ENCODE measurements at regions of chr6 and their contacts with region 1.

Region 1: DNA sequence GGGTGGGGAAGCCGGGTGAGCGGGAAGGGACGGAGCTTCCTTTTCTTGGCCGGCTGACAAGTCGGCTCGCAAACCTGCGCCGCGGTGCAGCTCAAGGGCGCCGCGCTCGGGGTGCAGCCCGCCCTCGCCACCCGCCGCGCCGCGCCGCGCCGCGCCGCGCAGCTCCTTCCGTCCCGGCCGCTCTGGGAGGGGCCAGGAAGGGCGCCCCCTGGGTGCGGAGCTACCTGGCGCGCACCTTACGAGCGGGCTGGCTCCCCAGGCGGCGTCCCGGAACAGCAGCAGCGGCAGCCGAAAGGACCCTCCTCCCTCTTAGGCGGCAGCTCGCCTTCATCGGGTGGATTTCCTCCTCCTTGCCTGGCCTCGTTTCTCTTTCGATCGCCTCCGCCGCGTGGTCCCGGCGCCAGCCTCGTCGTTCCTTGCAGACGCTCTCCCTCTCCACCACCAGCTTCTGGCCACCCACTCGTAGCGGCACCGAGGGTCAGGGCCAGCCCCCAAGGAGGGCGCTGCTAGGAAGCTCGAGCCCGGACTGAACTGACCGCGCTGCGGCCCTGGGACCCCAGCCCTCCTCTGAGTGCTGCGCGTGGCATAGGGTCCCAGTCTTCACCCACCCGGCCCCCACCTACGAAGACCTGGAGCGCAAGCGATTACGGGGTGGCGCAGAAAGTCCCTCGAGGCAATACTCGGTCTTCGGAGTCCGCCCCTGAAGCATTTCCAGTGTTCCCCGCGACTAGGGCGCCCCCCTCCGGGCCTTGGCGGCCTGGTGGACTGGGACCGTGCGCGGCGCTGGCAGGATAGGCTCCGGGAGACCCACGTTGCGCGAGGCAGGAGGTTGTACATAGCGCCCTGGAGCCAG is at the start of gene MAP3K5:
- DNase-seq: peak; percentile 96
- ATAC-seq: peak; percentile 80
- H3K4me3 Mint-ChIP-seq: peak within 1 kb of the TSS; percentile 94
- H3K27ac Mint-ChIP-seq: peak within 1 kb of the TSS; percentile 92
- H3K4me1 Mint-ChIP-seq: peaks cover 32% of the 10 kb centered on the region
- H3K27me3 Mint-ChIP-seq: no peaks in the 10 kb centered on the region
- total RNA-seq, gene MAP3K5: 18.3 to 21.7 TPM

Region 2: DNA sequence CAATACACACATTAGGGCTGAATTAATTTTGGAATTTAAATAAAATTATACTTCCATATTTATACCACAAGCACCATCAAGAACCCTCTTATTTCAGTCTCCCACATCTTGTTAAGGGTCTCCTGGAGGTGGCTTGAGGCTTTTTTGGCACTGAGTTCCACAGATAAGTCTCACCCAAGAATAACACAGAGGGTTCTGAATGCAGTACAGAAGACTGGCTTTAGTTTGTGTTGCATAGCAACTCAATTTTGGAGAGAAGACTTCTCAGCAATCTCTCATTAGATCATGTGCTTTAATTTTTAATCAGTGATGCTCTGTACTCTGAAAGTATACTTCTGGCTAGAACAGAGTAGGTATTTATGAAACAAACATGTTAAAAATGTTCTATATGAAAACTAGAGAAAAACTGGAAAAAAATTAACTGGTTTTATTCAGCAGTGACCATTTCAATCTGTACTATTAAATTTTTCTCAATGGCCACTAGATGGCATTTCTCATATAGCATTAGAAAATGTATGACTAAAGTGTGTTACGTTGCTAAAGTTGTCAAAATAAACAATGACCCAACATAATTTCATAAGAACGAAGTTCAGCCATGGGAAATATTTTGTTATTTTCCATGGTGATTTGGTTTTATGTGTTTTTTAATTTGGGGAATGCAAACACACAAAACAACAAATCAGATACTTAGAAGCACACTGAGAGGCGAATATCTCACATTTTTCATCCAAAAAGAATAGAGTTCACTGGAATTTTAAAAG is 209.7 kb before region 1 on chr6:
- CTCF ChIA-PET with region 1: interaction called, 22 read pairs
- DNase-seq: no peak
- ATAC-seq: no peak
- H3K4me3 Mint-ChIP-seq: no peak overlapping the region
- H3K27ac Mint-ChIP-seq: no peak overlapping the region
- H3K4me1 Mint-ChIP-seq: no peaks in the 10 kb centered on the region
- H3K27me3 Mint-ChIP-seq: no peaks in the 10 kb centered on the region

Region 3: DNA sequence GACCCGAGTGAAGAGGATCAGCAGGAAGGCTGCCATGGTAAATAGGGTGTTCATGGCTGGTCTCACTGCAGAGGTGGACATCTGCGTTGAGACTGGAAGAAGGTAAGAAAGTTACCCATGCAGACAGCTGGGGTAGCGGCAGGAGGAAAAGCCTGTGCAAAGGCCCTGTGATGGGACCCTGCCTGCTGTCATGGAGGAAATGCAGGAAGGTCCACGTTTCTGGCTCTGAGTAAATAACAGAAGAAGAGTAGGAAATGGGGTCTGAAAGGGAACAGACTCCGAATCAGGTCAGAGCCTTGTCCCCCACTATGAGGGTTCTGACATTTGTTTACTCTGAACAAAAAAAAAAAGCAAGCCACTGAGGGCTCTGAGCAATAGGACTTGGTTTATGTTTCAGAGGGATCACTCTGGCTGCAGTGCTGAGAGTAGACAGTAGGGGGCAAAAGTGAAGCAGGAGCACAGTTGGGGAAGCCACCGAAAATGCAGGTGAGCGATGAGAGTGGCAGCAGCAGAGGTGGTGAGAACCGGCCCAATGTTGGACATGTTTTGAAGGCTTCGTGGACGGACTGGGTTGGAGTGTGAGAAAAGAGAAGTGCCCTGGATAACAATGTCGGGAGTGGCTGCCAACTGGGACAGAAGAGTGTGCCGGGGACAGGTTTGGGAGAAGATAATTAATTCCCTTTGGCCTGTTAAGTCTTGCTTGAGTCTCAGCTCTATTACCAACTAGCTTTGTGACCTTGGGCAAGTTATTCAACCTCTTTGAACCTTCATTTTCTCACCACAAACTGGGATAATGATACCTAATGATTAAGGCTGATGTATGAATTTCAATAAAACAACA is 184.5 kb before region 1 on chr6:
- CTCF ChIA-PET with region 1: interaction called, 18 read pairs
- DNase-seq: peak; percentile 86
- ATAC-seq: peak; percentile 96
- H3K4me3 Mint-ChIP-seq: no peak overlapping the region
- H3K27ac Mint-ChIP-seq: no peak overlapping the region
- H3K4me1 Mint-ChIP-seq: peaks cover 23% of the 10 kb centered on the region
- H3K27me3 Mint-ChIP-seq: no peaks in the 10 kb centered on the region

Region 4: DNA sequence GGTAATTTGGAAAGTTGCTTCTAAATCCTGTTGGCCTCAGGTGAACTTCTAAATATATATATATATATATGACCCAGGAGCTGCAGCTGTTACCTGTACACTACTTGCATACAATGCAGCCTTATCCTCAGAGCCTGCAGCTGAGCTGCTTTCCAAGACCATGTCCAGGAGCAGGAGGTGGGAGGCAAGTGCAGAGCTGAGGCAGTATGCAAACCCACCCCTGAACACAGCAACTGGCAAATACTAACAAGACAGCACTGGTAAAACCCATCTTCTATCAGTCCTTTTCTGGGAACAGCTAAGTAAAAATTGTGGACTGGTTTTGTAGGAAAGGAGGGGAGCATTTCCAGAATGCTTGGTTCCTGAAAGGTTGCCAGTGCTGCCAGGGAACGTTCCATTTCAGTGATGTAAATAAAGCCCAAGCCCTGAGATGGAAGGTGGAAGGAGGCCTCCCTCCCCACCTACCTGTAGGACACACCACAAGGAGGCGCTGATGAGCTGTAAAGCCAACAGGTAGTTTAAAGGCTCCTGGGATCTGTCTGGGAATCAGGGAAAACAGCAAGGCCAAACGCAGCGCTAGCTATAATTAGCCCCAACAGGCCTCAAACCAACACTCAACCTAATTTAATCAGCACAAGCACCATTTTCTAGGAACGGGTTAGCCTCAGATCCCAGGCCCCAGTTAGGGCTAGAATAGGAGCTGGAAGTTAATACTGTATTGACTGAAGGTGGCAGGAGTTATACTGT is 148.6 kb before region 1 on chr6:
- CTCF ChIA-PET with region 1: interaction called, 424 read pairs
- DNase-seq: peak; percentile 85
- ATAC-seq: peak; percentile 57
- H3K4me3 Mint-ChIP-seq: no peak overlapping the region
- H3K27ac Mint-ChIP-seq: no peak overlapping the region
- H3K4me1 Mint-ChIP-seq: peaks cover 6% of the 10 kb centered on the region
- H3K27me3 Mint-ChIP-seq: no peaks in the 10 kb centered on the region

Region 5: GRCh38 chr6:136737871-136738691 is 54.6 kb before region 1 on chr6:
- CTCF ChIA-PET with region 1: interaction called, 36 read pairs
- DNase-seq: no peak
- ATAC-seq: no peak
- H3K4me3 Mint-ChIP-seq: no peak overlapping the region
- H3K27ac Mint-ChIP-seq: no peak overlapping the region
- H3K4me1 Mint-ChIP-seq: peaks cover 8% of the 10 kb centered on the region
- H3K27me3 Mint-ChIP-seq: no peaks in the 10 kb centered on the region

Region 6: GRCh38 chr6:136822376-136823127 is 29.9 kb after region 1 on chr6 and contains the start of gene PEX7:
- CTCF ChIA-PET with region 1: interaction called, 16 read pairs
- DNase-seq: peak; percentile 94
- ATAC-seq: peak; percentile 97
- H3K4me3 Mint-ChIP-seq: peak within 1 kb of the TSS; percentile 97
- H3K27ac Mint-ChIP-seq: peak within 1 kb of the TSS; percentile 98
- H3K4me1 Mint-ChIP-seq: peaks cover 18% of the 10 kb centered on the region
- H3K27me3 Mint-ChIP-seq: peaks cover 2% of the 10 kb centered on the region
- total RNA-seq, gene PEX7: 3.5 TPM